ENCODE measurements at regions of chr3 and their contacts with region 1.

Region 1: DNA sequence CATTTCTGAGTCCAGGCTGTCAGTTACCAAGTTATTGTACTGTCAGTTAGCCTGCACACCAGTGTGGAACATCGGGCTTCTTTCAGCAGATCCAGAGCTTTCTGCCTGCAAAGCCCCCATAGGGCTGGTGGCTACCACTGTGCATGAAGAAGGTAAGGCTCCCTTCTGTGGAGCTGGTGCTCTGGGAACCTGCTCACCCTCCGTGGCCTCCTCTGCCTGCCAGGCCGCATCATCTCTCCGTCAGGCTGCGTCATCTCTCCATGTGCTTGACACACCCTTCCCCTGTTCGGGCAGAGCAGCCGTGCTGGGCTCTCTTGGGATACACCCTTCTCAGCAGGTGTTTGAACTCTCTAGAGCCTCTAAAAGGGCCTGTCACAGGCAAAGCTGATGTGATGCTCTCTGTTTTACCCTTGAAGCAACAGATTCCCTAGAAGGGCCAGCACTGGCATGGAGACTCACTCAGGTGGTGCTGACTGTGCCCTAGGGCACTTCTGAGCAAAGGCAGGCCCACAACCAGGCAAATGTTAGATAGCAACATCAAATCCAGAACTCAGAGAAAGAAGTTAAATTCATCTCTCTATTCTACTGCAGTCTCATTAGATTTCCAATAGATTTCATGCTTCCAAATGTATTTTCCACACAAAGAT is 261.1 kb downstream of the EPHB1 start:
- DNase-seq: no peak
- ATAC-seq: no peak

Region 2: GRCh38 chr3:135109681-135110080 is 53.5 kb after region 1 on chr3:
- intact Hi-C with region 1: loop called in 1 of 2 experiments (anchors 10 kb)
- DNase-seq: no peak
- ATAC-seq: no peak

Region 3: DNA sequence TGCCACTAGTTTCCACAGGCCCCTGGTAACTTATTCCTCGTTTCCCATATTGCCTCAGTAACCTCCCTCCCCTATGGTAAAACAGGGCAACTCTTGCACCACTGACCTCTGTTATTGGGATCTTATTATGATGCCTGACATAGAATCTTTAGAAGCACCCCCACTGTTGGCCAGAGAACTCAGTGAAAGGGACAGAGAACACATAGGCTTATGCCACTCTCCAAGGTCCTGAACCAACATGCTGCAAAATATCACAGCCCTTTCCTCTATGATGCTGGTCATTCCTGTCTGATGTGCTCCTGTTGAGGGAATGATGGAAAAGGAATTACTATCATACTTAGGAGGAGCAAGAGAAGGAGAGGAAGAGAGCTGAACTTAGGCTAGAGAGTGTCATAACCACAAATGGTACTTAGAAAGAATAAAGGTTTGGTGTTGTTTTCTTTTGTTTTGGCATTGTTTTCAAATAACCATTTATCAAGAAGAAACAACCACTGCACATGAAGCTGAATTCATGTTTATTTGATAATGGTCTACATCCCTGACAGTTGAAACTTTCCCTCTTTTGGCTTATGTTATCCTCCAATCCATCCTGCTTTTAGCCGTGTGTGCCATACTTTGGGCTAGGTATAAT is 69.1 kb after region 1 on chr3:
- intact Hi-C with region 1: no loop called
- DNase-seq: no peak
- ATAC-seq: no peak

Region 4: GRCh38 chr3:135633076-135633475 is 576.9 kb after region 1 on chr3:
- intact Hi-C with region 1: no loop called
- DNase-seq: no peak
- ATAC-seq: no peak